GM23248 (cell line): ENCODE measurements at regions of chr11 and their contacts with region 1.

Region 1: DNA sequence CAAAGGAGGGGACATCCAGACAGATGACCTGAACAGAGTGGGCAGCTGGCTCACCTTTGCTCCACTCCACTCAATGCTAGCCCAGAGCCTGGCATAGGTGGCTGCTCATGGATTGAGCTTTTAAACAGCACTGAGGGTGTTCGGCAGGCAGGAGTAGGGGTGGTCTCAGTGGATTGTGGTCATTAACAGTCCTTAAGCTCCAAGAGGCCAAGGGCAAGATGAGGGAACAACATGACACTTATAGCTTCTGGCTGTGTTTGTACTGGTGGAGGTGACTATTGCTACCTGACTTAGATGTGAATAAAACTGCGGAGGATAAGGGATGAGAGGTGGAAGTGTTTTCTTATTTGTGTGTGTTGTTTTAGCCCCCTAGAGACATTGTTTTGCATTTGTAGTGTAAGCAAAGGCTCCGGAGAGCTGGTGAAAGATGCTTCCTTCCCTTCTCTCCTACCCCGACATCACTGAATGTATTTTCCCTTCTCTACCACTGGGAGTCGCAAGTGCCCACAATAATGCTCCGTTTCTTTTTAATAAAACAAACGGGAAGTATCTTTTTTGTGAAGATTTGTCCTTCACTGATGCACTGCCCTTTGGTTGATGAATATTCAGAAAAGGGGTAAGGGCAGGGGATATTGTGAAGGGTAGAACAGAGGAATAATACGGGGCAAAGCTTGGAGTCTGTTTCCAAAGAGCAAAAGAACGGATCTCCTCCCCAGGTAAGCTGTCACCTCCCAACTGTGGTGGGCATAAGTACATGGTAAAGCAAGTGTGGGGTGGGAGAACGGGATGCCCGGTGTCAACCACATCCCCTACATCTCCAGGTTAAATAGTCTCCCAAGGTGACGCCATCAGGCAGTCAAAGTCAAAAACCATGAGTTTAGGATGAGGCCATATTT is 27.5 kb upstream of the MTNR1B start:
- DNase-seq: peak; percentile 63
- H3K4me3 ChIP-seq: no peak overlapping the region
- H3K27ac ChIP-seq: no peak overlapping the region
- H3K4me1 ChIP-seq: no peaks in the 10 kb centered on the region
- H3K27me3 ChIP-seq: peaks cover 15% of the 10 kb centered on the region

Region 2: GRCh38 chr11:93648167-93648566 is 706.2 kb after region 1 on chr11:
- in situ Hi-C with region 1: loop called (anchors 25 kb)
- DNase-seq: peak; percentile 21
- H3K4me3 ChIP-seq: no peak overlapping the region
- H3K27ac ChIP-seq: no peak overlapping the region
- H3K4me1 ChIP-seq: no peaks in the 10 kb centered on the region
- H3K27me3 ChIP-seq: peaks cover 7% of the 10 kb centered on the region